ENCODE measurements at regions of chr1 and their contacts with region 1.

Region 1: DNA sequence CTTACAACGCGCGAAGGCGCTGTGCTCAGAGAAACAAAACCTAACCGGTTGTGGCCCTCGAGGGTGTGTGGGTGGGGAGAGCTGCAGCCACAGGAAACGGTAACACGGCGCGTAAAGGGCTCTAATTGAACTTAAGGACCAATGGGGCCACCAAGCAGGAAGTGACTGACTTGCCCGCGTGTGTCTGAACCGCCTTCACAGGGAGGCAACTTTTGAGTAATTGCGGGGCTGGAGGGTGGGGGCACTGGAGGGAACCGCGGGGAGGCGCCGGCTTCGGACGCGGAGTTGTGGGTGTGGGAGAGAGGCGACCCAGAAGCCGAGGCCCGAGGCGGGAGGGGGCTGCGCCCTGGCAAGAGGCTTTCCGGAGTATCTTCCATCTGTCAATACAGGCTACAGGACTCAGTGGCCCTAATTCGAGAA is 577 bp upstream of the PNRC2 start:
- DNase-seq: peak; percentile 89 to 94
- ATAC-seq: peak; percentile 80

Region 2: GRCh38 chr1:23923592-23924499 is 35.2 kb before region 1 on chr1:
- intact Hi-C with region 1: no loop called
- DNase-seq: no peak
- ATAC-seq: no peak

Region 3: GRCh38 chr1:24027838-24028468 is 68.9 kb after region 1 on chr1:
- intact Hi-C with region 1: loop called in 1 of 2 experiments (anchors 10 kb)
- DNase-seq: no peak
- ATAC-seq: peak; percentile 83

Measured in left colon (tissue), 2 donors.